ENCODE measurements at regions of chr6 and their contacts with region 1.

Region 1: DNA sequence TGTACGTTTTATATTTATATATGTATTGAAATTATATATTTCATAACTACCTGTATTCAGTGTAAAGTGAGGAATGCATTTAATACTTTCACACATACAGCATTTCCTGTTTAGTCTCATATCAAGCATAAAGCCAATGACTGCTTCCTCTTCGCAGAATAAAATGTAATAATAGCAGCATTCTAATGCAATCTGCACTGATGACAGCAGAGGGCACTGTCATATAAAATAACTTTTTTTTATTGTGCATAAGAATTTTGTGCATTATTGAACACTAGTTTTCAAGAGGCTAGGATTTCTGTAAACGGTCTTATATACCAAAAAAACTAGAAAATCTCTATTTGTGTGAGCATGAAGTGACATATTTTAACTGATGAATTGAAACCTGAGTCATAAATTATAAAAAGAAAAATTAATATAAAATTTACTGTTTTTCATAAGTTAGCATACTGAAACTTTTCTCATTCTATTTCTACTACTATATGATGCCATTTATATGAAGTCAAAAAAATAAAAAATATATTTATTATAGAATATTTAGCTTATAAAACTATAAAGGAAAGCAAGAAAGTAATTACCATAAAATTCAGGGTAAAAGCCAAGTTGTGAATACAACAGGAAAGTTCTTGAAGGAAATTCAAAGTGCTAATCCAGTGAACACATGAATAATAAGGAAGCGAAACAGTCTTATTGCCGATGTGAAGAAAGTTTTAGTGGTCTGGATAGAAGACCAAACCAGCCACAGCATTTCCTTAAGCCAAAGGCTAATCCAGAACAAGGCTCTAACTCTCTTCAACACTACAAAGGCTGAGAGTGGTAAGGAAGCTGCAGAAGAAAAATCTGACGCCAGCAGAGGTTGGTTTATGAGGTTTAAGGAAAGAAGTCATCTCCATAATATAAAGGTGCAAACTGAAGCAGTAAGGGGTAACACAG is 36.3 kb downstream of the RNF146 start:
- DNase-seq: peak; percentile 78
- ATAC-seq: peak; percentile 92
- H3K4me3 ChIP-seq: no peak overlapping the region
- H3K4me3 Mint-ChIP-seq: no peak overlapping the region
- H3K27ac ChIP-seq: peak overlapping the region in 1 of 2 donors; percentile 21
- H3K27ac Mint-ChIP-seq: peak overlapping the region; percentile 53
- H3K4me1 ChIP-seq: peaks cover 3 to 5% of the 10 kb centered on the region in 2 donors
- H3K4me1 Mint-ChIP-seq: peaks cover 38% of the 10 kb centered on the region
- H3K27me3 ChIP-seq: no peaks in the 10 kb centered on the region
- H3K27me3 Mint-ChIP-seq: no peaks in the 10 kb centered on the region
- CTCF ChIP-seq: peak; percentile 90

Region 2: GRCh38 chr6:127291495-127291894 is 11.5 kb before region 1 on chr6:
- CTCF ChIA-PET with region 1: interaction called, 38 read pairs
- POLR2A ChIA-PET with region 1: no interaction called
- intact Hi-C with region 1: no loop called
- DNase-seq: peak; percentile 23
- ATAC-seq: peak; percentile 43
- H3K4me3 ChIP-seq: peak overlapping the region in 1 of 5 experiments; percentile 38
- H3K4me3 Mint-ChIP-seq: peak overlapping the region; percentile 59
- H3K27ac ChIP-seq: peak overlapping the region; percentile 30 to 47
- H3K27ac Mint-ChIP-seq: peak overlapping the region; percentile 59
- H3K4me1 ChIP-seq: peaks cover 0 to 18% of the 10 kb centered on the region in 2 donors
- H3K4me1 Mint-ChIP-seq: peaks cover 26% of the 10 kb centered on the region
- H3K27me3 ChIP-seq: no peaks in the 10 kb centered on the region
- H3K27me3 Mint-ChIP-seq: no peaks in the 10 kb centered on the region
- CTCF ChIP-seq: no peak

Region 3: GRCh38 chr6:127342946-127343808 is 40.2 kb after region 1 on chr6 and contains the start of gene ECHDC1:
- CTCF ChIA-PET with region 1: interaction called, 7 read pairs
- POLR2A ChIA-PET with region 1: interaction called, 3 read pairs
- intact Hi-C with region 1: loop called (anchors 2 kb)
- DNase-seq: peak; percentile 80
- ATAC-seq: peak; percentile 69
- H3K4me3 ChIP-seq: peak within 1 kb of the TSS; percentile 70 to 97 (median 94)
- H3K4me3 Mint-ChIP-seq: no peak within 1 kb of the TSS
- H3K27ac ChIP-seq: peak within 1 kb of the TSS; percentile 63 to 77
- H3K27ac Mint-ChIP-seq: no peak within 1 kb of the TSS
- H3K4me1 ChIP-seq: peaks cover 37 to 47% of the 10 kb centered on the region in 2 donors
- H3K4me1 Mint-ChIP-seq: peaks cover 24% of the 10 kb centered on the region
- H3K27me3 ChIP-seq: no peaks in the 10 kb centered on the region
- H3K27me3 Mint-ChIP-seq: no peaks in the 10 kb centered on the region
- CTCF ChIP-seq: no peak
- total RNA-seq, gene ECHDC1: 60.0 and 60.5 TPM in 2 replicates

Region 4: GRCh38 chr6:127464881-127465459 is 162.0 kb after region 1 on chr6:
- CTCF ChIA-PET with region 1: interaction called, 13 read pairs
- POLR2A ChIA-PET with region 1: no interaction called
- intact Hi-C with region 1: loop called (anchors 1 kb)
- DNase-seq: peak; percentile 45
- ATAC-seq: peak; percentile 45
- H3K4me3 ChIP-seq: no peak overlapping the region
- H3K4me3 Mint-ChIP-seq: no peak overlapping the region
- H3K27ac ChIP-seq: no peak overlapping the region
- H3K27ac Mint-ChIP-seq: no peak overlapping the region
- H3K4me1 ChIP-seq: no peaks in the 10 kb centered on the region
- H3K4me1 Mint-ChIP-seq: no peaks in the 10 kb centered on the region
- H3K27me3 ChIP-seq: no peaks in the 10 kb centered on the region
- H3K27me3 Mint-ChIP-seq: no peaks in the 10 kb centered on the region
- CTCF ChIP-seq: peak; percentile 76

Region 5: GRCh38 chr6:127539272-127539671 is 236.3 kb after region 1 on chr6:
- CTCF ChIA-PET with region 1: interaction called, 73 read pairs
- POLR2A ChIA-PET with region 1: no interaction called
- intact Hi-C with region 1: loop called (anchors 1 kb)
- DNase-seq: peak; percentile 13
- ATAC-seq: peak; percentile 31
- H3K4me3 ChIP-seq: no peak overlapping the region
- H3K4me3 Mint-ChIP-seq: no peak overlapping the region
- H3K27ac ChIP-seq: no peak overlapping the region
- H3K27ac Mint-ChIP-seq: no peak overlapping the region
- H3K4me1 ChIP-seq: no peaks in the 10 kb centered on the region
- H3K4me1 Mint-ChIP-seq: no peaks in the 10 kb centered on the region
- H3K27me3 ChIP-seq: peaks cover 0 to 5% (median 0%) of the 10 kb centered on the region in 4 experiments
- H3K27me3 Mint-ChIP-seq: no peaks in the 10 kb centered on the region
- CTCF ChIP-seq: peak; percentile 68

Region 6: DNA sequence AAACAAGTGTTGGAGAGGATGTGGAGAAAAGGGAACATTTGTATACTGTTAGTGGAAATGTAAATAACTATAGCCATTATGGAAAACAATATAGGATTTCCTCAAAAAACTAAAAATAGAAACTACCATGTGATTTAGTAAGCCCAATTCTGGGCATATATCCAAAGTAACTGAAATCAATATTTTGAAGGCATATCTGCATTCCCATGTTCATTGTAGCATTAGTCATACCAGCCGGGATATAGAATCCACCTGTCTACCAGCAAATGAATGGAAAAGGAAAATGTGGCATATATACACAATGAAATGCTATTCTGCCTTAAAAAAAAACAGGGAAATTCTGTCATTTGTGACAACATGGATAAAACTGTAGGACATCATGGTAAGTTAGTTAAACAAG is 258.7 kb after region 1 on chr6:
- CTCF ChIA-PET with region 1: no interaction called
- POLR2A ChIA-PET with region 1: no interaction called
- intact Hi-C with region 1: no loop called
- DNase-seq: no peak
- ATAC-seq: no peak
- H3K4me3 ChIP-seq: no peak overlapping the region
- H3K4me3 Mint-ChIP-seq: no peak overlapping the region
- H3K27ac ChIP-seq: no peak overlapping the region
- H3K27ac Mint-ChIP-seq: no peak overlapping the region
- H3K4me1 ChIP-seq: no peaks in the 10 kb centered on the region
- H3K4me1 Mint-ChIP-seq: no peaks in the 10 kb centered on the region
- H3K27me3 ChIP-seq: no peaks in the 10 kb centered on the region
- H3K27me3 Mint-ChIP-seq: peaks cover 5% of the 10 kb centered on the region
- CTCF ChIP-seq: no peak